ENCODE measurements at regions of chr1 and their contacts with region 1.

Region 1: GRCh38 chr1:67339623-67340343 is 32.1 kb downstream of the IL12RB2 start:
- DNase-seq: peak; percentile 84
- ATAC-seq: peak; percentile 35
- H3K4me3 ChIP-seq: peak overlapping the region; percentile 20; the same call in 1 of the 2 replicates
- H3K27ac ChIP-seq: peak overlapping the region; percentile 87
- H3K4me1 ChIP-seq: peaks cover 71% of the 10 kb centered on the region
- H3K27me3 ChIP-seq: no peaks in the 10 kb centered on the region
- CTCF ChIP-seq: no peak
- EP300 ChIP-seq: no peak
- POLR2A ChIP-seq: no peak
- RAD21 ChIP-seq: no peak

Region 2: GRCh38 chr1:67323087-67323486 is 16.7 kb before region 1 on chr1:
- CTCF ChIA-PET with region 1: interaction called, 6 read pairs
- POLR2A ChIA-PET with region 1: no interaction called
- RAD21 ChIA-PET with region 1: interaction called, 3 read pairs
- SMC1A ChIA-PET with region 1: interaction called, 10 read pairs
- in situ Hi-C with region 1: no loop called
- intact Hi-C with region 1: no loop called
- DNase-seq: no peak
- ATAC-seq: peak; percentile 31; the same call in 1 of the 3 replicates
- H3K4me3 ChIP-seq: no peak overlapping the region
- H3K27ac ChIP-seq: no peak overlapping the region
- H3K4me1 ChIP-seq: no peaks in the 10 kb centered on the region
- H3K27me3 ChIP-seq: peaks cover 0 to 2% of the 10 kb centered on the region in 2 experiments; a peak in 2 of 4 replicates
- CTCF ChIP-seq: no peak
- EP300 ChIP-seq: no peak
- POLR2A ChIP-seq: no peak
- RAD21 ChIP-seq: no peak

Region 3: GRCh38 chr1:67430352-67431155 is 90.8 kb after region 1 on chr1 and contains the start of gene SERBP1:
- CTCF ChIA-PET with region 1: interaction called, 6 read pairs
- POLR2A ChIA-PET with region 1: interaction called, 3 read pairs
- RAD21 ChIA-PET with region 1: interaction called, 6 read pairs
- SMC1A ChIA-PET with region 1: interaction called, 6 read pairs
- in situ Hi-C with region 1: no loop called
- intact Hi-C with region 1: loop called (anchors 2 kb)
- DNase-seq: peak; percentile 98
- ATAC-seq: peak; percentile 86
- H3K4me3 ChIP-seq: peak within 1 kb of the TSS; percentile 91
- H3K27ac ChIP-seq: peak within 1 kb of the TSS; percentile 96
- H3K4me1 ChIP-seq: peaks cover 15% of the 10 kb centered on the region
- H3K27me3 ChIP-seq: no peaks in the 10 kb centered on the region
- CTCF ChIP-seq: no peak
- EP300 ChIP-seq: peak in 1 of 2 experiments; percentile 50; a peak in 2 of 4 replicates
- POLR2A ChIP-seq: peak; percentile 59
- RAD21 ChIP-seq: no peak
- polyA plus RNA-seq, gene SERBP1: 76.7 to 111 TPM

Region 4: DNA sequence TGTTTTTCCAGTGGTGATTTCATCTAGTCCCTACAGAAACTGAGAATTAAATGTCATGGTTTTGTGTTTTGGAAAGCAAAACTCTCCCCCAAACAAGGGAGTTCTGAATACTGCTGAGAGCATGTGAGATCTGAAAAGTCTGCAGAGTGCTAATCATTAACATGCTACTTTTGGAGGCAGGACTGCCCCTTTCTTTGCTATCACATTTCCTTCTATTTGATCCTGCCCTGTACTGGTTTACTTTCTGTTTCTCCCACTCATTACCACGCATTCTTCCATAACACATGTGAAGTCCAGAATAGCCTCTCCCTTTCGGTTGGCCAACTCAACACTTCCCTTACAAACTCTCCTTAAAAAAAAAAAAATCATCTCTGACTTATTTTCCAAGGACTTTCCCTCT is 408.8 kb after region 1 on chr1:
- CTCF ChIA-PET with region 1: no interaction called
- POLR2A ChIA-PET with region 1: no interaction called
- RAD21 ChIA-PET with region 1: no interaction called
- SMC1A ChIA-PET with region 1: no interaction called
- in situ Hi-C with region 1: loop called (anchors 10 kb)
- intact Hi-C with region 1: no loop called
- DNase-seq: peak; percentile 47
- ATAC-seq: peak; percentile 88
- H3K4me3 ChIP-seq: 0 out of 2 replicates have a peak overlapping the region, but pooled peaks have one; percentile 0
- H3K27ac ChIP-seq: no peak overlapping the region
- H3K4me1 ChIP-seq: peaks cover 12% of the 10 kb centered on the region
- H3K27me3 ChIP-seq: no peaks in the 10 kb centered on the region
- CTCF ChIP-seq: no peak
- EP300 ChIP-seq: no peak
- POLR2A ChIP-seq: no peak
- RAD21 ChIP-seq: no peak

Measured in GM12878 (cell line).